CD8-positive, alpha-beta T cell (primary cell): ENCODE measurements at regions of chr21 and their contacts with region 1.

Region 1: GRCh38 chr21:36803816-36804439 is 105.0 kb downstream of the SIM2 start:
- DNase-seq: no peak
- ATAC-seq: no peak
- H3K4me3 ChIP-seq: no peak overlapping the region
- H3K4me3 Mint-ChIP-seq: no peak overlapping the region
- H3K27ac ChIP-seq: no peak overlapping the region
- H3K27ac Mint-ChIP-seq: peak overlapping the region; percentile 28
- H3K4me1 ChIP-seq: no peaks in the 10 kb centered on the region
- H3K4me1 Mint-ChIP-seq: no peaks in the 10 kb centered on the region
- H3K27me3 ChIP-seq: no peaks in the 10 kb centered on the region
- H3K27me3 Mint-ChIP-seq: no peaks in the 10 kb centered on the region
- CTCF ChIP-seq: no peak

Region 2: DNA sequence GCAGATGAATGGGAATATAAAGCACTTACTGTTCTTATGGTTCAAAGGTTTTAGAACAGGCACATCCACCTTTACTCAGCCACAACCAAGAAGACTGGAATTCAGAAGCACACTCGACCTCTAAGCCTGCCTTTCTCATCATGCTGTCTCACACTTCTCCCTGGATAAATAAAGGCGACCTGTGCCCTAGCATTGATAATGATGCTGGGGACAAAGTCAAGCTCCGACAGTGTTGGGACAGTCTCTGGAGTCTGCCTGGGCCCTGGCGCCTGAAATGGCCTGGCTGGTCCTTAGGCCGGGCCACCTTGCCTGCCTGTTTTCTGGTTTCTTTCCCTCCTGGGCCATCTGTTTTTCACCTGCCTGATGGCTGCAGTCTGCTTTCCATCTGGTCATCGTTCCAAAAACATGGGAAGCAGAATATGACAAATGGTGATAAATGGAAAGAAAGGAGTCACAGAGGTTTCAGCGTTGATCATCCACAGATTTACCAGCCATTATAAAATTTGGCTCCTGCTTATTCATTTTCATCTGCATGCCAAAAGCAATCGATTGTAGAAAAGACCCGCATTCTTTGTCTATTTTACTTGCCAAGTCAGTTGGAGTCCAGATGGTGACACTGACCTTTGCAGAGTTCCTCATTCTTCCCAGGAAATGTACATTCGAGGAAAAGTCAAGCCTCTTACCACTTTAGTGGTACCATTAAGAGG is 1361.7 kb after region 1 on chr21:
- CTCF ChIA-PET with region 1: no interaction called
- POLR2A ChIA-PET with region 1: no interaction called
- intact Hi-C with region 1: loop called in 1 of 2 experiments (anchors 5 kb)
- DNase-seq: no peak
- ATAC-seq: no peak
- H3K4me3 ChIP-seq: no peak overlapping the region
- H3K4me3 Mint-ChIP-seq: no peak overlapping the region
- H3K27ac ChIP-seq: no peak overlapping the region
- H3K27ac Mint-ChIP-seq: no peak overlapping the region
- H3K4me1 ChIP-seq: no peaks in the 10 kb centered on the region
- H3K4me1 Mint-ChIP-seq: no peaks in the 10 kb centered on the region
- H3K27me3 ChIP-seq: no peaks in the 10 kb centered on the region
- H3K27me3 Mint-ChIP-seq: peaks cover 4% of the 10 kb centered on the region
- CTCF ChIP-seq: no peak